Caco-2 (cell line): ENCODE measurements at regions of chr15 and their contacts with region 1.

Region 1: DNA sequence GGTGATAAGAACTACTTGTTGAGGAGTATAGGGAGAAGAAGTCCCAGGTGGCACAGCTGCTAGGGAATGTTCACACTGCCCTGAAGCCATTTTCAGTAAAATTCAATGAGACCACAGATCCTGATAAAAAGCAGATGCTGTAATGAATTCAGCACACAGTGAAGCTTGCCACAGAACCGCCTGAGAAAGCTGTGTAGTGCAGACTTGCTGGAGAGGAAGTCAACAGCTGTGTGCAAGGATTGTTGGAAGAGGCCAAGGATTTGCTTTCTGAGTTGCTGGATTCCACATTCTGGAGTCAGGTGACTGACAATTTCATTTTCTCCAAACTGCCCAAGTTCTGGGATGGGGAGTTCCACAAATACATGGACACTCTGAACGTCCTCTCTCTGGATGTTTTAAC is 70.9 kb downstream of the ANP32A start:
- DNase-seq: no peak
- H3K4me3 ChIP-seq: no peak overlapping the region
- H3K4me3 Mint-ChIP-seq: no peak overlapping the region
- H3K27ac Mint-ChIP-seq: no peak overlapping the region
- H3K4me1 ChIP-seq: no peaks in the 10 kb centered on the region
- H3K4me1 Mint-ChIP-seq: no peaks in the 10 kb centered on the region
- H3K27me3 ChIP-seq: no peaks in the 10 kb centered on the region
- H3K27me3 Mint-ChIP-seq: no peaks in the 10 kb centered on the region
- CTCF ChIP-seq: no peak

Region 2: GRCh38 chr15:68700455-68701123 is 49.2 kb before region 1 on chr15:
- CTCF ChIA-PET with region 1: no interaction called
- POLR2A ChIA-PET with region 1: no interaction called
- intact Hi-C with region 1: no loop called
- DNase-seq: no peak
- H3K4me3 ChIP-seq: no peak overlapping the region
- H3K4me3 Mint-ChIP-seq: no peak overlapping the region
- H3K27ac Mint-ChIP-seq: no peak overlapping the region
- H3K4me1 ChIP-seq: no peaks in the 10 kb centered on the region
- H3K4me1 Mint-ChIP-seq: no peaks in the 10 kb centered on the region
- H3K27me3 ChIP-seq: no peaks in the 10 kb centered on the region
- H3K27me3 Mint-ChIP-seq: peaks cover 11% of the 10 kb centered on the region
- CTCF ChIP-seq: no peak

Region 3: DNA sequence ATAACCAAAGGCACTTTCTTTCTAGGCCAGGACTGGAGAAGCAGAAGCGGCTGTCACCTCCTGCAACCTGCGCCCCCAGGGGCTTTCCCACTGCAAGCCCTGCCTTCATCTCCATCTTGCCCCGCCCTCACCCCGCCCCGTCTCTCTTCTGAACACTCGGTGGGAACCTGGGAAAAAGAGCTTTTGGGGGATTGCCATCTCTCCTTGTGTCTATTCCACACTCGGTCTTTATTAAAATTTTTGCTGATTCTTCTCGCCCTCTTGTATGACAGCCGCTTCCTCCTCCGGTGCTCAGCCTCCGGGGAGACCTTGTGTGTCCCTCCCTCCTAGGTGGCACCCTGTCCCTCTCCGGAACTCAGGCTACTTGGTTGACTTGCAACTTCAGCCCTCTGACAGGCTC is 138.6 kb after region 1 on chr15:
- CTCF ChIA-PET with region 1: no interaction called
- POLR2A ChIA-PET with region 1: interaction called, 11 read pairs
- intact Hi-C with region 1: no loop called
- DNase-seq: no peak
- H3K4me3 ChIP-seq: no peak overlapping the region
- H3K4me3 Mint-ChIP-seq: peak overlapping the region; percentile 55
- H3K27ac Mint-ChIP-seq: no peak overlapping the region
- H3K4me1 ChIP-seq: peaks cover 15% of the 10 kb centered on the region
- H3K4me1 Mint-ChIP-seq: peaks cover 15% of the 10 kb centered on the region
- H3K27me3 ChIP-seq: no peaks in the 10 kb centered on the region
- H3K27me3 Mint-ChIP-seq: peaks cover 8% of the 10 kb centered on the region
- CTCF ChIP-seq: no peak